B cell (primary cell): ENCODE measurements at regions of chr6 and their contacts with region 1.

Region 1: DNA sequence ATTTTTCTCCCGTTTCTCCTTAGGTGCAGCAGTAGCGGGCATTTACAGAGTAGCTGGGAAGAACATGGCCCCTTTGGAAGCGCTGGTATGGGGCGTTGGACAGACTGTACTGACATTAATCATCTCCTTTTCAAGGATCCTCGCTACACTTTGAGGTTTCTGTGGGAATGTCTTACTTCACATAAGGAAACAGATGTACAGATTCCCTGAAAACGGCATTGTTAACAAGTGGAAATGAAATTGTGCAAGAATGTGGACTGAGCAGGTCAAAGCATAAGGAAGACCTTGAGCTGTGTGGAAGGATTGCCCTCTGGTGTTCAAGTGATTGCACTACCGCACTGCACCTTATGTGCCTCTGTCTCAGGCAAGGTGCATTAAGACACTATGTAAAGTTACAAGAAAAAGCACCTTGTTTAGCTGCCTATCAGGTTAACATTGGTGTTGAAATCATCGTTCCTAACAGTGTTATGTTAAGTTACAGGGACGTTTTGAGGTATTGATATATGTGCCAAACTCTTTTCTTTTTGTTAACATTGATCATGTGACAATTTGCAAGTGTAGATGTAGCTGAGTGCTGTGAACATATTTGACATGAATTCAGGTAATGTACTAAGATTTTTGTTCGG is 38.0 kb downstream of the TMEM170B start:
- DNase-seq: peak; percentile 74
- ATAC-seq: peak; percentile 85
- H3K4me3 ChIP-seq: no peak overlapping the region
- H3K4me3 Mint-ChIP-seq: no peak overlapping the region
- H3K27ac ChIP-seq: no peak overlapping the region
- H3K27ac Mint-ChIP-seq: no peak overlapping the region
- H3K4me1 ChIP-seq: no peaks in the 10 kb centered on the region
- H3K4me1 Mint-ChIP-seq: peaks cover 3% of the 10 kb centered on the region
- H3K27me3 ChIP-seq: no peaks in the 10 kb centered on the region
- H3K27me3 Mint-ChIP-seq: no peaks in the 10 kb centered on the region
- CTCF ChIP-seq: peak; percentile 93

Region 2: GRCh38 chr6:10954590-10955010 is 620.9 kb before region 1 on chr6:
- CTCF ChIA-PET with region 1: interaction called, 4 read pairs
- POLR2A ChIA-PET with region 1: no interaction called
- intact Hi-C with region 1: loop called (anchors 5 kb)
- DNase-seq: peak; percentile 73
- ATAC-seq: peak; percentile 54
- H3K4me3 ChIP-seq: no peak overlapping the region
- H3K4me3 Mint-ChIP-seq: no peak overlapping the region
- H3K27ac ChIP-seq: no peak overlapping the region
- H3K27ac Mint-ChIP-seq: no peak overlapping the region
- H3K4me1 ChIP-seq: no peaks in the 10 kb centered on the region
- H3K4me1 Mint-ChIP-seq: no peaks in the 10 kb centered on the region
- H3K27me3 ChIP-seq: peaks cover 0 to 2% (median 0%) of the 10 kb centered on the region in 4 experiments
- H3K27me3 Mint-ChIP-seq: peaks cover 22% of the 10 kb centered on the region
- CTCF ChIP-seq: peak; percentile 81

Region 3: DNA sequence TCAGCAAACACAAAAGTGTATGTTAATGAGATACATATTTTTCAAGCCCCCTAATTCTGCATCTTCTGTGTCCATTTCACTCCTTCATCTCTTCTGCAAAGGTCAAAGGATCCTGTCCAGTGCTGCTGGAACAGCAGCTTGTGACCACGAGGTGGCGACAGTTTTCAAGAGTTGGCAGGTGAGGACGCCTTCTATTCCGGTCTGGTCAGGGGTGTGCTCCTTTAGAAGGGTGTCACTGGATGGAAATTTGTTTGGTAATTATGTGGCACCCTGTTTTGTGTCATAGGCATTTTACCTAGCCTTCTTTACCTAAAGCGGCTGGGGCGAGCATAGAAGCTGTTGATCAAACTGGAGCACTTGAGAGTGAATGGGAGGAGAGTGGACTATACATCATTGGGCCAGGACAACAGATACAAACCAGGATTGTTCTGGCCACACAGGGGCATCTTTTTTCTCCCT is 431.1 kb before region 1 on chr6:
- CTCF ChIA-PET with region 1: interaction called, 24 read pairs
- POLR2A ChIA-PET with region 1: no interaction called
- intact Hi-C with region 1: no loop called
- DNase-seq: peak; percentile 77
- ATAC-seq: peak; percentile 80
- H3K4me3 ChIP-seq: no peak overlapping the region
- H3K4me3 Mint-ChIP-seq: no peak overlapping the region
- H3K27ac ChIP-seq: no peak overlapping the region
- H3K27ac Mint-ChIP-seq: no peak overlapping the region
- H3K4me1 ChIP-seq: peaks cover 0 to 5% of the 10 kb centered on the region in 2 donors
- H3K4me1 Mint-ChIP-seq: peaks cover 7% of the 10 kb centered on the region
- H3K27me3 ChIP-seq: no peaks in the 10 kb centered on the region
- H3K27me3 Mint-ChIP-seq: no peaks in the 10 kb centered on the region
- CTCF ChIP-seq: peak; percentile 94

Region 4: GRCh38 chr6:11585426-11586016 is 10.0 kb after region 1 on chr6:
- CTCF ChIA-PET with region 1: interaction called, 14 read pairs
- POLR2A ChIA-PET with region 1: no interaction called
- intact Hi-C with region 1: no loop called
- DNase-seq: peak; percentile 28
- ATAC-seq: no peak
- H3K4me3 ChIP-seq: no peak overlapping the region
- H3K4me3 Mint-ChIP-seq: no peak overlapping the region
- H3K27ac ChIP-seq: no peak overlapping the region
- H3K27ac Mint-ChIP-seq: no peak overlapping the region
- H3K4me1 ChIP-seq: no peaks in the 10 kb centered on the region
- H3K4me1 Mint-ChIP-seq: no peaks in the 10 kb centered on the region
- H3K27me3 ChIP-seq: no peaks in the 10 kb centered on the region
- H3K27me3 Mint-ChIP-seq: peaks cover 4% of the 10 kb centered on the region
- CTCF ChIP-seq: peak; percentile 44